CD4-positive, alpha-beta T cell (primary cell): ENCODE measurements at regions of chr1 and their contacts with region 1.

Region 1: DNA sequence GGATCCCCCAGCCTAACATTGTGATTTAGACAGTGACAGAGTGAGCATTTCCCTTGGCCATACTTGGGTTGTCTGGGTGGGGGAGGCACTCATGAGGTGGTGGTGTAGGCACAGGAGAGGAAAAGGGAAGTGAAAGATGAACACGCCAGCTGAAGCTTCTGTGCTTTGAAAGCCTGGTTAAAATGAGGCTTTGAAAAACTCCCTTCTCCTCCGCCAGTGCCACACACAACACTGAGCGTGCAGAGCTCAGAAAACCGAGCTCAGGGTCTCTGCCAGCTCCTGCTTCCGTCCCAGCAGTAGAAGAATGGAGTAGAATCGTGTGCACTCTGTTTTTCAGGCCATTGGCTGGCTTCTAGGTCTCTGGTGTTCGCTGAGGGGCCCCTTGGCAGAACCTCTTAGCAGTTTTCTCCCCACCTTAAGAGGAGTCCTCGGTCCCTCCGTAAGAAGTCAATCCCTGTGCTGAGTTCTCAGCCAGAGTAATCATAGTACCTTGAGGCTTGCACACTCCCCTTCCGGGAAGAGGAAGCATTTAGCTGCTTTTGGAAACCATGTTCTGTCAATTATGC is 12.9 kb downstream of the PLEKHM2 start:
- DNase-seq: peak in 12 of 14 experiments; percentile 11 to 76 (median 32)
- ATAC-seq: peak; percentile 83
- H3K4me3 ChIP-seq: peak overlapping the region; percentile 51
- H3K4me3 Mint-ChIP-seq: peak overlapping the region; percentile 90
- H3K27ac ChIP-seq: peak overlapping the region; percentile 60 to 86
- H3K27ac Mint-ChIP-seq: peak overlapping the region; percentile 84
- H3K4me1 ChIP-seq: peaks cover 33% of the 10 kb centered on the region
- H3K4me1 Mint-ChIP-seq: peaks cover 47% of the 10 kb centered on the region
- H3K27me3 ChIP-seq: no peaks in the 10 kb centered on the region
- H3K27me3 Mint-ChIP-seq: no peaks in the 10 kb centered on the region
- CTCF ChIP-seq: no peak

Region 2: GRCh38 chr1:15684468-15685291 is 12.4 kb before region 1 on chr1:
- CTCF ChIA-PET with region 1: no interaction called
- POLR2A ChIA-PET with region 1: interaction called, 25 read pairs
- intact Hi-C with region 1: loop called in 1 of 2 experiments (anchors 1 kb)
- DNase-seq: peak in 13 of 14 experiments; percentile 3 to 69 (median 25)
- ATAC-seq: peak; percentile 41
- H3K4me3 ChIP-seq: peak overlapping the region; percentile 90
- H3K4me3 Mint-ChIP-seq: peak overlapping the region; percentile 93
- H3K27ac ChIP-seq: peak overlapping the region; percentile 56 to 75
- H3K27ac Mint-ChIP-seq: peak overlapping the region; percentile 95
- H3K4me1 ChIP-seq: peaks cover 32% of the 10 kb centered on the region
- H3K4me1 Mint-ChIP-seq: peaks cover 28% of the 10 kb centered on the region
- H3K27me3 ChIP-seq: no peaks in the 10 kb centered on the region
- H3K27me3 Mint-ChIP-seq: no peaks in the 10 kb centered on the region
- CTCF ChIP-seq: no peak

Region 3: GRCh38 chr1:15723631-15724251 is 26.7 kb after region 1 on chr1:
- CTCF ChIA-PET with region 1: no interaction called
- POLR2A ChIA-PET with region 1: no interaction called
- intact Hi-C with region 1: no loop called
- DNase-seq: no peak
- ATAC-seq: no peak
- H3K4me3 ChIP-seq: no peak overlapping the region
- H3K4me3 Mint-ChIP-seq: no peak overlapping the region
- H3K27ac ChIP-seq: no peak overlapping the region
- H3K27ac Mint-ChIP-seq: no peak overlapping the region
- H3K4me1 ChIP-seq: no peaks in the 10 kb centered on the region
- H3K4me1 Mint-ChIP-seq: no peaks in the 10 kb centered on the region
- H3K27me3 ChIP-seq: no peaks in the 10 kb centered on the region
- H3K27me3 Mint-ChIP-seq: no peaks in the 10 kb centered on the region
- CTCF ChIP-seq: no peak